T-cell (primary cell): ENCODE measurements at regions of chr1 and their contacts with region 1.

Region 1: GRCh38 chr1:167687919-167688519 is 33.8 kb upstream of the MPZL1 start:
- DNase-seq: peak; percentile 8 to 88 (median 67)
- ATAC-seq: peak; percentile 73 to 83 (median 78)
- H3K4me3 ChIP-seq: no peak overlapping the region
- H3K4me3 Mint-ChIP-seq: no peak overlapping the region
- H3K27ac ChIP-seq: no peak overlapping the region
- H3K27ac Mint-ChIP-seq: peak overlapping the region; percentile 31 to 66
- H3K4me1 ChIP-seq: peaks cover 0 to 6% of the 10 kb centered on the region in 2 experiments
- H3K4me1 Mint-ChIP-seq: peaks cover 15 to 31% (median 19%) of the 10 kb centered on the region in 3 donors
- H3K27me3 ChIP-seq: no peaks in the 10 kb centered on the region
- H3K27me3 Mint-ChIP-seq: no peaks in the 10 kb centered on the region

Region 2: DNA sequence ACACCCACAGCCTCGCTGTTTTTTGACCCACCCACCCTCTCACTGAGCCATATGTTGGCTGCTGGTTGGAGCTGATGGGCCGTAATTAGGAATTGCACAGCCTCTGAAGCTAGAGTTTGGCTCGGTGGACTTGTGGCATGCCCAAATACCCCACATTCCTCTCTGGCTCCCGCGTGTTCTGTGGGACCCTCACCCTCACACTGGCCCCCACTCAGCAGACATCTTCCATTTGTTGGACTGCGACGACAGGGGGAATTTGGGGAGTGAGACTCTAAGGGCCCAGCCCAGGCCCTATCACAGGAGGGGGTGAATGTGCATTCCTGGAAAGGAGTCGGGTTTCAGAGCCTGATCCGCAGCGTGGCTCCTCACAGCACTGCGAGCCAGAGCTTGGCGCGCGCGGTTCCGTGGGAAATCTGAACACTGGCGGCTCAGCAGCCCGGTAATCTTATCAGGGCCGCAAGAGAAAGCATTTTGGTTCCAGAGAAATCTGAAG is 52.8 kb before region 1 on chr1:
- CTCF ChIA-PET with region 1: interaction called, 16 to 21 read pairs
- POLR2A ChIA-PET with region 1: no interaction called
- DNase-seq: no peak
- ATAC-seq: no peak
- H3K4me3 ChIP-seq: no peak overlapping the region
- H3K4me3 Mint-ChIP-seq: peak overlapping the region in 1 of 3 donors; percentile 92
- H3K27ac ChIP-seq: peak overlapping the region; percentile 49
- H3K27ac Mint-ChIP-seq: peak overlapping the region; percentile 94 to 97
- H3K4me1 ChIP-seq: peaks cover 64 to 82% of the 10 kb centered on the region in 2 experiments
- H3K4me1 Mint-ChIP-seq: peaks cover 85 to 95% (median 89%) of the 10 kb centered on the region in 3 donors
- H3K27me3 ChIP-seq: no peaks in the 10 kb centered on the region
- H3K27me3 Mint-ChIP-seq: no peaks in the 10 kb centered on the region

Region 3: DNA sequence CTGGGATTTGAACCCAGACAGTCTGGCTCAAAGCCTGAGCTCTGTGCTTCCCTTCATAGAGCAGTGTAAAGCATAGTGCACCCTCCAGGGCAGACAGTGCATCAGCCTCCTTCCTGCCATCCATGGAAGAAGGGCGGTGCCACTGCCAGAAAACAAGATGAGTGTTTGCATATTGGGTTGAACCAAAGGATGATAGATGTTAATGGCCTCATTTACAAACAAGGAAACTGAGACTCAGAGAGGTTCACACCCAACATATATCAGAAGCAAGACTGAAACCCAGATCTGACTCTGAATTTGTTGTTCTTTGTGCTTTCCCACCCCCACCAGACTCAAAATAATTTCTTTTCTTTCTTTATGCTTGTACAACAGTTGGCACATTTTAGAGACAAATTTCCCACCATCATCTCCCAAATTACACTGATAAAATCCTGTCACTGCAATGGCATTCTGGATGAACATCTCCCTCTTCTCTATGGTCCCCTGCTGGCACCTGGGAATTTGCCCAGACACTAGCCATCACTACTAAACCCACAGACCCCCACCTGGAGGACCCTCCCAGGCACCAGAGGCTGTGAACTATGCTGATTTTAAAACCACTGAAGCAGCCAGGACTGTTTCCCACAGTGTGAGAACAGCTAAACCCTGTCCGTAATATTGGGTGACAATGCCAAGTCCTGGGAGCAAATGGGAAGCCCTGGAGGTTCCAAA is 11.7 kb before region 1 on chr1:
- CTCF ChIA-PET with region 1: interaction called, 6 to 11 read pairs
- POLR2A ChIA-PET with region 1: interaction called in 1 of 2 experiments, 3 read pairs
- DNase-seq: no peak
- ATAC-seq: peak in 3 of 4 experiments; percentile 22 to 48 (median 34)
- H3K4me3 ChIP-seq: no peak overlapping the region
- H3K4me3 Mint-ChIP-seq: no peak overlapping the region
- H3K27ac ChIP-seq: peak overlapping the region; percentile 10
- H3K27ac Mint-ChIP-seq: peak overlapping the region; percentile 74 to 78
- H3K4me1 ChIP-seq: peaks cover 2 to 53% of the 10 kb centered on the region in 2 experiments
- H3K4me1 Mint-ChIP-seq: peaks cover 35 to 37% (median 36%) of the 10 kb centered on the region in 3 donors
- H3K27me3 ChIP-seq: no peaks in the 10 kb centered on the region
- H3K27me3 Mint-ChIP-seq: no peaks in the 10 kb centered on the region

Region 4: DNA sequence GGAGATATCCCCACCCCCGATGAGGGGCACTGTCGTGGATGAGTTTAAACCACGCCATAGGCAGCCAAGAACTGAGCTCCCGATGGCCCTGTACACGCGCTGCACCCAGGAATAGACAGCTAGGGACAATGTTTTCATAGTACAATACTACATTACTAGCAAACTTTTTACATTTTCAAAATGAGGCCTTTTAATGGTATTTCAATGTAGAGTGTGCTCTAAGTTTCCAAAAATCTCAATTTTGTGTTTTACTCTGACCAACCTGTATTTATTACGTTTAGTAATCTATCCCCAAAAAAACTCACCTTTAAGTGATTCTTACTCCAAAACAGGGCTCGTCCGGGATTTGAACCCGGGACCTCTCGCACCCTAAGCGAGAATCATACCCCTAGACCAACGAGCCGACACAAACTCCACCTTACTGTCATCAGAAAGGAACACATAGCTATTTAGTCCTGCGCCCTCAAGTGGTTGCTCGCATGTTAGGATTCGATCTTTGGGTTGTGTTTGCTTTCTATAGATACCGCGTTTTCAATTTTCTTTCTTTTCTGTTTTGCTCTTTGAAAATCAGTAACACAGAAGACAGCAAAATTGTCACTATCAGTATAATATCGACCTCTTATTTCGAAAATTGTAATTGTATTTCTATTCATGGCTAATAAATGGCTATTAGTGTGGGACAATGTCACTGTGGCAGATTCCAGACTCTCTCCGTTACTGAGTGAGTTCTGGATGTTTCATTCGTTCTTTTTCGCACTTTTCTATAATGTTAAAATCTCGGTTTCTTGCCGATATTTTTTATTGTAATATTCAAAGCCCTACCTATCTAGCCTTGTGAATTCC is 27.4 kb after region 1 on chr1:
- CTCF ChIA-PET with region 1: interaction called in 1 of 2 experiments, 10 read pairs
- POLR2A ChIA-PET with region 1: interaction called in 1 of 2 experiments, 5 read pairs
- DNase-seq: peak; percentile 70 to 94 (median 83)
- ATAC-seq: peak; percentile 58 to 64 (median 61)
- H3K4me3 ChIP-seq: peak overlapping the region; percentile 70 to 91
- H3K4me3 Mint-ChIP-seq: peak overlapping the region; percentile 82 to 87 (median 83)
- H3K27ac ChIP-seq: peak overlapping the region; percentile 39
- H3K27ac Mint-ChIP-seq: peak overlapping the region; percentile 79 to 91
- H3K4me1 ChIP-seq: peaks cover 15 to 30% of the 10 kb centered on the region in 2 experiments
- H3K4me1 Mint-ChIP-seq: peaks cover 43 to 48% (median 46%) of the 10 kb centered on the region in 3 donors
- H3K27me3 ChIP-seq: no peaks in the 10 kb centered on the region
- H3K27me3 Mint-ChIP-seq: peaks cover 0 to 6% of the 10 kb centered on the region in 2 donors